ENCODE measurements at regions of chr10 and their contacts with region 1.

Region 1: GRCh38 chr10:70758757-70759514 is 26.2 kb downstream of the TBATA start:
- DNase-seq: peak; percentile 66
- H3K4me3 ChIP-seq: no peak overlapping the region
- H3K27ac ChIP-seq: no peak overlapping the region
- H3K4me1 ChIP-seq: no peaks in the 10 kb centered on the region
- H3K27me3 ChIP-seq: no peaks in the 10 kb centered on the region
- CTCF ChIP-seq: peak; percentile 57 to 74 (median 66)
- POLR2A ChIP-seq: no peak

Region 2: GRCh38 chr10:70212879-70213278 is 546.1 kb before region 1 on chr10:
- intact Hi-C with region 1: loop called (anchors 10 kb)
- DNase-seq: no peak
- H3K4me3 ChIP-seq: no peak overlapping the region
- H3K27ac ChIP-seq: no peak overlapping the region
- H3K4me1 ChIP-seq: no peaks in the 10 kb centered on the region
- H3K27me3 ChIP-seq: no peaks in the 10 kb centered on the region
- CTCF ChIP-seq: no peak
- POLR2A ChIP-seq: no peak

Region 3: DNA sequence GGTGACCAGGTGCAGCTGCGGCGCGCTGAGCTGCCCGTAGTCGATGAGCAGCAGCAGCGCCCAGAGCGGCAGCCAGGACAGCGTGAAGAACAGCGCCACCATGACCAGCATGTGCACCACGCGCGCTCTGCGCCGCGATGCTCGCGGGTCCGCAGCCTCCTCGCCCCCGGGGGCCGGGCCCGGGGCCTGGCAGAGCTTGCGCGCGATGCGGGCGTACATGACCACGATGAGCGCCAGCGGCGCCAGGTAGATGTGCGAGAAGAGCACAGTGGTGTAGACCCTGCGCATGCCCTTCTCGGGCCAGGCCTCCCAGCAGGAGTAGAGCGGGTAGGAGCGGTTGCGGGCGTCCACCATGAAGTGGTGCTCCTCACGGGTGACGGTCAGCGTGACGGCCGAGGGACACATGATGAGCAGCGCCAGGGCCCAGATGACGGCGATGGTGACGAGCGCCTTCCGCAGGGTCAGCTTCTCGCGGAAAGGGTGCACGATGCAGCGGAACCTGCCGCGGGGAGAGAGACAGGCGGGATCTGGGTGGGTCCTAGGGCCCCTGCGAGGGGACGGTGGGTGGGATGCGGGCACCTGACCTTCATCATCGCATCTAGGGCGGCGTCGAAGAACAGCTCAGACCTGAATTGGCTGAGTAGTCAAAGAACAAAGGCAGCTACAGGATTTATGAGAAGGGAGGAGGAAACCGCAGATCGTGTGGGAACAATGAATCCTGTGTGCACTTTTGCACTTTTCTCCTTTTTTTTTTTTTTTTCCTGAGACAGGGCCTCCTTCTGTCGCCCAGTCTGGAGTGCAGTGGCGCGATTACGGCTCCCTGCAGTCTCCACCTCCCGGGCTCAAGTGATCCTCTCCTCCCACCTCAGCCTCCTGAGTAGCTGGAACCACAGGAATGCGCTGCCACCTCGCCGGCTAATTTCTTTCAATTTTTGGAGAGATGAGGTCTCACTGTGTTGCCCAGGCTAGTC is 503.3 kb before region 1 on chr10:
- intact Hi-C with region 1: no loop called
- DNase-seq: peak; percentile 10
- H3K4me3 ChIP-seq: no peak overlapping the region
- H3K27ac ChIP-seq: no peak overlapping the region
- H3K4me1 ChIP-seq: no peaks in the 10 kb centered on the region
- H3K27me3 ChIP-seq: no peaks in the 10 kb centered on the region
- CTCF ChIP-seq: no peak
- POLR2A ChIP-seq: no peak

Region 4: DNA sequence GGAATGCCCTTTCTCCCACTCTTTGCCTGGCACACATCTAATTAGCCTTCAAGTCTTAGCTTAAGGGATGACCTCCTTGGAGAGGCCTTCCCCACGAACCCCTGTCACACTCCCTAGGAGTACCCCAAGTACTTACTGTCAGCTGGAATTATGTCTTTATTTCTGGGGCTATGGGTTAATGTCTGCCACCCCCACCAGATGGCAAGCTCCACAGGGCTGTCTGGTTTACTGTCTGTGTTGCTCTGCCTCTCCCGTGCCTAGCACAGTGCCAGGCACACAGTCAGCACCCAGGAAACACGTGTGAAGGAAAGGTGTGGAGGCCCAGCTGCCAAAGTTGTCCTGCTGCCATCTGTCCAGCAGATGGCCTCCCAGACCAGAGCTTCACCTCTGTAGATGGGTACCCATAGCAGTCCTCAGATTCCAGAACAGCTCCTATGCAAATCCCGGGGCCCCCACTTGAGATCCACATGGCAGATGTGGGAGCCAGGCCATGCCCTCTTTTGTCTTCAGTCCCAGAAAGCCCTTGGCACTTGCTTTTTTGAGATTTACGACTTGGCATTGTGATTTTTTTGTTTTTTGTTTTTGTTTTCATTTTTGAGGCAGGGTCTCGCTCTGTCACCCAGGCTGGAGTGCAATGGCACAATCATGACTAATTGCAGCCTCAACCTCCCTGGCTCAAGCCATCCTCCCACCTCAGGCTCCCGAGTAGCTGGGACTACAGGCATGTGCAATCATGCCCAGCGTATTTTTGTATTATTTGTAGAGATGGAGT is 297.5 kb before region 1 on chr10:
- intact Hi-C with region 1: loop called (anchors 5 kb)
- DNase-seq: peak; percentile 20
- H3K4me3 ChIP-seq: no peak overlapping the region
- H3K27ac ChIP-seq: no peak overlapping the region
- H3K4me1 ChIP-seq: no peaks in the 10 kb centered on the region
- H3K27me3 ChIP-seq: no peaks in the 10 kb centered on the region
- CTCF ChIP-seq: peak; percentile 30 to 76 (median 63)
- POLR2A ChIP-seq: no peak

Region 5: DNA sequence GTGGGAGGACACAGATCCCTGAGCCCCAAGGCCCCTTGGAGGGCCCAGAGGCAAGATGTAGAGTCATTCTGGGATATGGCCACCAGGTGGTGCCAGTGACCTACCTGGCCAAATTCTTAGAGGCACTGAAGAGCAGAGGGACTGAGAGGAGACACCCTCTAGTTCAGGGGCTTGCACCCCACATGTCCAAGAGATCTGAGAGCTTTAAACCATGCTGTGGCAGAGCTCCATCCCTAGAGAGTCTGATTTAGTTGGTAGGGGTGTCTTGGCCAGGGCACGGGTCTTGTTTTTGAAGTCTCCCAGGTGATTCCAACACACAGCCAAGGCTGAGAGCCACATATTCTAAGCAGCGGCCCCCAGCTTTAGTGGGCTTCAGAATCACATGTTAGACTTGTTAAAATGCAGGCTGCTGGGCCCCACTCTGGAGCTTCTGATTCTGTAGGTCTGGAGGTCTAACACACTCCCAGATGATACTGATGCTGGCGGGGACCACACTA is 208.9 kb before region 1 on chr10:
- intact Hi-C with region 1: loop called (anchors 2 kb)
- DNase-seq: peak; percentile 36
- H3K4me3 ChIP-seq: no peak overlapping the region
- H3K27ac ChIP-seq: no peak overlapping the region
- H3K4me1 ChIP-seq: no peaks in the 10 kb centered on the region
- H3K27me3 ChIP-seq: no peaks in the 10 kb centered on the region
- CTCF ChIP-seq: peak; percentile 66 to 87 (median 84)
- POLR2A ChIP-seq: no peak

Measured in prostate gland (tissue), 2 donors.